Activated CD4-positive, alpha-beta T cell treated with anti-CD3 and anti-CD28 coated beads for 36 hours (primary cell): ENCODE measurements at regions of chr13 and their contacts with region 1.

Region 1: DNA sequence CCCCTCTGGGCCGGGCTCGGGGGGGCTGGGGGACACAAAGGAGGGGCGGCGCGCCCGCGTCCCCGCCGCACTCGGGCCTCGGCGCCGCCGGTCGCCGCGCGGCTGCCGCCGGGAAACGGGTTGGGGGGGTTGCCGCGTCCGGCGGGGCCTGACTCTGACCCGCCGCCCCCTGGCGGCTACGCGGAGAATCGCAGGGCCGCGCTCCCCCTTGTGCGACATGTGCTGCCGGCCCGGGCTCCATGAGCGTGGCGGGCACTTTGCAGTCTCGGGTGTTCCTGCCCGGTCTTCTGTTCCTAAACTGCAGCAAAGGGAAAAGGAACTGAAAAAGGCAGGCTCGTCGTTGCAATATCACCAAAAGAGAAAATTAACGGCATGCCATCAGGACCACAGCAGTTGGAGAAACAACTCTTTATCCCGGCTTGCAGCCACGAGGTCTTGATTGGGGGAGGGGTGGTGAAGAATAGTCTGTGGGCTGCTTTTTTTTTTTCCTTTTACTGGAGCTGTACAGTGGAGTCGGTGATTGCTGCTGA is 1.5 kb downstream of the MIR17HG start:
- DNase-seq: peak; percentile 96
- ATAC-seq: peak; percentile 50
- H3K4me3 Mint-ChIP-seq: peak overlapping the region; percentile 92
- H3K27ac Mint-ChIP-seq: peak overlapping the region; percentile 96
- H3K4me1 Mint-ChIP-seq: peaks cover 46% of the 10 kb centered on the region
- H3K27me3 Mint-ChIP-seq: no peaks in the 10 kb centered on the region

Region 2: DNA sequence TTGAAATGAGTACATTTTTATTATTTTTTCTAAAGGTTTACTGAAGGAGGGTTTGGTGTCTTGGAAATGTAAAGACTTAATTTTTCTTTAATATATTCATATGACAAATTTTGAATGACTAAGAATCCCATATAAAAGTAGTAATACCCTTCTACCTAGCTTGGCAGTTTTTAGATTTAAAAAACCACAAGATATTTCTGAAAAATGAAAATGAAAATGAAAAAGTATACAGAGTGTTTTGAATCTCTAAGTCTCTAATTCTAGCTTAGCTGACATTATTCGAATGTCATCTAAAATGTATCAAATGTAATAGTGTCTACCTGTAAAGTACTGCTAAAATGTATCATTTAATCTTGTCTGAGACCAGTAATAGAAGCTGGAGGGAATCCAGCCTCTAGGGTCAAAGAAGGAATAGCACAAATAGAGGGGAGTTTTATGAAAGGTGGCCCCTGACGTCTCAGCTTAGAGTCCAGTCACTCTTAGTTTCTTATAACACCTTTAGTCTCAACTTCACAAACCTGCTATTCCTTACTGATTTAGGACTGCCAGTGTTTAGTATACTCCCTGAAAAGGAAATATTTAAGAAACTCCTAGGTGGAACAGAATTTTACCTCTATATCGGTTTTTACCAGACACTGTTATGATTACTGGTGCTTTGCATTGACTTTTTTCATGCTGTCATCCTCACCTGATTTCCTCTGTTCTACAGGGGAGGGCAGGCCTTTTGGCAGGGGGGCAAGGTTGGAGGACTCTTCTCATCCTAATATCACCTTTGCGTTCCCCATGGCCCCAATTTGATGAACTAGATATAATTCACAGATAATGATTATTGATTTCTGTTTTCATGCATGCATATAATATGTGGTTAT is 17.7 kb before region 1 on chr13:
- CTCF ChIA-PET with region 1: interaction called, 7 read pairs
- POLR2A ChIA-PET with region 1: interaction called, 3 read pairs
- intact Hi-C with region 1: loop called (anchors 1 kb)
- DNase-seq: no peak
- ATAC-seq: peak; percentile 90
- H3K4me3 Mint-ChIP-seq: peak overlapping the region; percentile 45
- H3K27ac Mint-ChIP-seq: peak overlapping the region; percentile 80
- H3K4me1 Mint-ChIP-seq: peaks cover 18% of the 10 kb centered on the region
- H3K27me3 Mint-ChIP-seq: peaks cover 5% of the 10 kb centered on the region

Region 3: GRCh38 chr13:91369441-91369831 is 20.5 kb after region 1 on chr13:
- CTCF ChIA-PET with region 1: interaction called, 5 read pairs
- POLR2A ChIA-PET with region 1: interaction called, 5 read pairs
- intact Hi-C with region 1: loop called (anchors 1 kb)
- DNase-seq: peak; percentile 76
- ATAC-seq: peak; percentile 81
- H3K4me3 Mint-ChIP-seq: no peak overlapping the region
- H3K27ac Mint-ChIP-seq: peak overlapping the region; percentile 93
- H3K4me1 Mint-ChIP-seq: peaks cover 43% of the 10 kb centered on the region
- H3K27me3 Mint-ChIP-seq: peaks cover 6% of the 10 kb centered on the region

Region 4: GRCh38 chr13:91398413-91399272 is 49.7 kb after region 1 on chr13 and contains the start of gene GPC5:
- CTCF ChIA-PET with region 1: no interaction called
- POLR2A ChIA-PET with region 1: no interaction called
- intact Hi-C with region 1: loop called (anchors 1 to 2 kb)
- DNase-seq: peak; percentile 92
- ATAC-seq: peak; percentile 98
- H3K4me3 Mint-ChIP-seq: peak within 1 kb of the TSS; percentile 69
- H3K27ac Mint-ChIP-seq: peak within 1 kb of the TSS; percentile 47
- H3K4me1 Mint-ChIP-seq: peaks cover 15% of the 10 kb centered on the region
- H3K27me3 Mint-ChIP-seq: peaks cover 48% of the 10 kb centered on the region
- total RNA-seq, gene GPC5: 0.63 to 0.66 TPM

Region 5: GRCh38 chr13:91652404-91652803 is 303.4 kb after region 1 on chr13:
- CTCF ChIA-PET with region 1: no interaction called
- POLR2A ChIA-PET with region 1: no interaction called
- intact Hi-C with region 1: no loop called
- DNase-seq: no peak
- ATAC-seq: no peak
- H3K4me3 Mint-ChIP-seq: no peak overlapping the region
- H3K27ac Mint-ChIP-seq: no peak overlapping the region
- H3K4me1 Mint-ChIP-seq: no peaks in the 10 kb centered on the region
- H3K27me3 Mint-ChIP-seq: no peaks in the 10 kb centered on the region